ENCODE measurements at regions of chr18 and their contacts with region 1.

Region 1: GRCh38 chr18:29271496-29271895 is 1094.6 kb upstream of the CDH2 start:
- DNase-seq: no peak

Region 2: DNA sequence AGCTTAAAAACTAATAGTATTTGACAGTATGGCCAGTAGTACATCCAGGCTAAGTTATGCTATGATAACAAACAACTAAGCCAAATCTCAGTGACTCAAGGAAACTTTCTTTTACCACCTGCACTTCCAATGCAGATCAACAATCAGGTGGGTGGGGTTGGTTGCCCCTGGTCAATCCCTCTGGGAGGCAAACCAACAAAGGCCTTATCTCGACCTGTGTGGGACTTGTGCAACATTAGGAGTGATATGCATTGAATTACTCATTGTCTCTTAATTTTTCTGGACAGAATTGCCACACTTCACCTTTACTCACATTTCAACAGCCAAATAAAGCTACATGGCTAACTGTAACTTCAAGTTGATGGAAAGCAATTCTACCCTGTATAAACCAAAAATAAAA is 45.3 kb before region 1 on chr18:
- intact Hi-C with region 1: loop called in 1 of 2 experiments (anchors 10 kb)
- DNase-seq: no peak

Region 3: GRCh38 chr18:29234751-29235150 is 36.7 kb before region 1 on chr18:
- intact Hi-C with region 1: loop called (anchors 2 to 10 kb)
- DNase-seq: no peak

Region 4: GRCh38 chr18:29259838-29260237 is 11.7 kb before region 1 on chr18:
- intact Hi-C with region 1: no loop called
- DNase-seq: no peak

Measured in posterior vena cava (tissue), 2 donors.